GM12878 (cell line): ENCODE measurements at regions of chr6 and their contacts with region 1.

Region 1: GRCh38 chr6:150685860-150686259 is 86.2 kb downstream of the PLEKHG1 start:
- DNase-seq: peak; percentile 11
- ATAC-seq: peak; percentile 82
- H3K4me3 ChIP-seq: no peak overlapping the region
- H3K27ac ChIP-seq: no peak overlapping the region
- H3K4me1 ChIP-seq: peaks cover 10% of the 10 kb centered on the region
- H3K27me3 ChIP-seq: no peaks in the 10 kb centered on the region; a peak in 1 of 4 replicates
- CTCF ChIP-seq: peak; percentile 71 to 85 (median 80)
- EP300 ChIP-seq: no peak
- POLR2A ChIP-seq: no peak
- RAD21 ChIP-seq: peak; percentile 77

Region 2: DNA sequence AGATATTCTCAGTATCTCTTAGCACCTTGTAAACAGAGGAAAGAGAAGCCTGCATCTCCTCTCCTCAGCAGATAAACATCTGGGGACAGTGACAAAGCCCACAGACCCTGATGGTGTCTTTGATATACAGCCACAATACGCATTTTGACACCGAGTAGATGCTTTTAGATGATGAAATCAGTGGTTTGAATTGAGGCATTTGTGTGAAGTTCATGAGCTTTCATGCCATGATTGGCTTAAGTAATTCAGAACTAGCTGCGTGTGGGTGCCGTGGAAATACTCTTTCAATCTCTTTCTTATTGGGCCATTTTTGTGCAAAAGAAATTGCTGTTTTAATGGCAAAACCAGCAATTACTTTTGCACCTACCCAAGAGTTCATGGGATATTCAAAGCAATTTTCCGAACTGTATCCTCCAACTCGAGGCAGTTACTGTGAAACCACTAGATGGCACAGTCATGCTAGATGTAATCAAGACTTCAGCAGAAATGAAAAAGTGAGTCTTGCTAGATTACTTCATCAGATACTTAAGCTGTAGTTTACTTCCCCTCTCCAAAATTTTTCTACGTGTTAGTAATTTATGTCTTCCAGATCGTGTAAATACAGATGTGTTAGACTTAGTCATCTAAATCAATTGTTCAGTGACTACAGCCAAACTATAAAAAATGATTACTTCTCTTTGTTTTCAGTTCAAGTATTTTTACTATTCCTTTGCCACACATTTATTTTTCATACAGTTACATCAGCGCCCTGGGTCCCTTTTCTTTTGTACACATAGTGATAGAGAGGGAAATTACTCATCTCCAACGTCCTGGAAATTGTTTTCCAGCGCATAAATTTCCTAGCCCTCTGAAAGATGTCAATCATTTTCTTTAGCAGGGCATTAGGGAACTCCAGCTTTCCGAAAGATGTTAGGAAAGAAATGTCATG is 267.7 kb before region 1 on chr6:
- CTCF ChIA-PET with region 1: interaction called, 21 read pairs
- POLR2A ChIA-PET with region 1: no interaction called
- RAD21 ChIA-PET with region 1: interaction called, 16 read pairs
- SMC1A ChIA-PET with region 1: interaction called, 9 read pairs
- in situ Hi-C with region 1: no loop called
- intact Hi-C with region 1: loop called (anchors 5 kb)
- DNase-seq: peak; percentile 40
- ATAC-seq: peak; percentile 95
- H3K4me3 ChIP-seq: peak overlapping the region; percentile 57; the same call in 1 of the 2 replicates
- H3K27ac ChIP-seq: no peak overlapping the region
- H3K4me1 ChIP-seq: no peaks in the 10 kb centered on the region
- H3K27me3 ChIP-seq: no peaks in the 10 kb centered on the region; a peak in 1 of 4 replicates
- CTCF ChIP-seq: peak; percentile 77 to 88 (median 80)
- EP300 ChIP-seq: no peak
- POLR2A ChIP-seq: no peak
- RAD21 ChIP-seq: peak; percentile 90

Region 3: GRCh38 chr6:150641398-150642139 is 44.3 kb before region 1 on chr6:
- CTCF ChIA-PET with region 1: interaction called, 12 read pairs
- POLR2A ChIA-PET with region 1: no interaction called
- RAD21 ChIA-PET with region 1: interaction called, 6 read pairs
- SMC1A ChIA-PET with region 1: interaction called, 27 read pairs
- in situ Hi-C with region 1: no loop called
- intact Hi-C with region 1: loop called (anchors 5 kb)
- DNase-seq: no peak
- ATAC-seq: peak; percentile 62
- H3K4me3 ChIP-seq: peak overlapping the region; percentile 59
- H3K27ac ChIP-seq: peak overlapping the region; percentile 63
- H3K4me1 ChIP-seq: peaks cover 30% of the 10 kb centered on the region
- H3K27me3 ChIP-seq: no peaks in the 10 kb centered on the region
- CTCF ChIP-seq: no peak
- EP300 ChIP-seq: no peak
- POLR2A ChIP-seq: no peak
- RAD21 ChIP-seq: no peak

Region 4: GRCh38 chr6:150672800-150673199 is 13.1 kb before region 1 on chr6:
- CTCF ChIA-PET with region 1: interaction called, 18 read pairs
- POLR2A ChIA-PET with region 1: interaction called, 3 read pairs
- RAD21 ChIA-PET with region 1: interaction called, 4 read pairs
- SMC1A ChIA-PET with region 1: interaction called, 14 read pairs
- in situ Hi-C with region 1: no loop called
- intact Hi-C with region 1: no loop called
- DNase-seq: no peak
- ATAC-seq: no peak
- H3K4me3 ChIP-seq: no peak overlapping the region
- H3K27ac ChIP-seq: no peak overlapping the region
- H3K4me1 ChIP-seq: no peaks in the 10 kb centered on the region
- H3K27me3 ChIP-seq: no peaks in the 10 kb centered on the region
- CTCF ChIP-seq: no peak
- EP300 ChIP-seq: no peak
- POLR2A ChIP-seq: no peak
- RAD21 ChIP-seq: no peak

Region 5: DNA sequence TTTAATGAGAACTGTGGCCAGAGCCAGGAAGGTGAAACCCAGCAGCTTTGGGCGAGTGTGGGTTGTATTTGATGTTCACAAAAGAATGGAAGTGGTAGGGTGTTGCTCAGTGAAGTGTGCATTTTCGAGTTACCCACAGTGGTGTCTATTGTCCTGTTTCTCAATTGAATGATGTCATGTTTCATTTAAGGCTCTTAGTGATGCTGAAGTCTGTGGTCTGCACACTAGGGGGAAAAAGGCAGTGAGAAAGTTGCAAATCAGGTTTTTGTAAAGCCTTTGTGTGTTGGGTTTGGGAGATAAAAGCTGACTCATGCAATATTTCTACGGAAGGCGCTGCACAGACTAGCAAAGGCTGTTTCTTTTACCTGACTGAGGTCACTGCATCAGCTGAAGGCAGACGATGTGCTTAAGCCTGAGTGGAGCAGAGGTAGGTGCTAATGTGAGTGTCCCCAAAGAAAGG is 34.9 kb after region 1 on chr6:
- CTCF ChIA-PET with region 1: interaction called, 25 read pairs
- POLR2A ChIA-PET with region 1: interaction called, 3 read pairs
- RAD21 ChIA-PET with region 1: interaction called, 7 read pairs
- SMC1A ChIA-PET with region 1: interaction called, 43 read pairs
- in situ Hi-C with region 1: no loop called
- intact Hi-C with region 1: loop called (anchors 2 kb)
- DNase-seq: peak; percentile 94
- ATAC-seq: peak; percentile 96
- H3K4me3 ChIP-seq: 0 out of 2 replicates have a peak overlapping the region, but pooled peaks have one; percentile 7
- H3K27ac ChIP-seq: peak overlapping the region; percentile 32
- H3K4me1 ChIP-seq: peaks cover 19% of the 10 kb centered on the region
- H3K27me3 ChIP-seq: no peaks in the 10 kb centered on the region
- CTCF ChIP-seq: peak in 1 of 3 experiments; percentile 16; a peak in 1 of 6 replicates
- EP300 ChIP-seq: peak; percentile 77 to 98
- POLR2A ChIP-seq: no peak
- RAD21 ChIP-seq: peak; percentile 40

Region 6: DNA sequence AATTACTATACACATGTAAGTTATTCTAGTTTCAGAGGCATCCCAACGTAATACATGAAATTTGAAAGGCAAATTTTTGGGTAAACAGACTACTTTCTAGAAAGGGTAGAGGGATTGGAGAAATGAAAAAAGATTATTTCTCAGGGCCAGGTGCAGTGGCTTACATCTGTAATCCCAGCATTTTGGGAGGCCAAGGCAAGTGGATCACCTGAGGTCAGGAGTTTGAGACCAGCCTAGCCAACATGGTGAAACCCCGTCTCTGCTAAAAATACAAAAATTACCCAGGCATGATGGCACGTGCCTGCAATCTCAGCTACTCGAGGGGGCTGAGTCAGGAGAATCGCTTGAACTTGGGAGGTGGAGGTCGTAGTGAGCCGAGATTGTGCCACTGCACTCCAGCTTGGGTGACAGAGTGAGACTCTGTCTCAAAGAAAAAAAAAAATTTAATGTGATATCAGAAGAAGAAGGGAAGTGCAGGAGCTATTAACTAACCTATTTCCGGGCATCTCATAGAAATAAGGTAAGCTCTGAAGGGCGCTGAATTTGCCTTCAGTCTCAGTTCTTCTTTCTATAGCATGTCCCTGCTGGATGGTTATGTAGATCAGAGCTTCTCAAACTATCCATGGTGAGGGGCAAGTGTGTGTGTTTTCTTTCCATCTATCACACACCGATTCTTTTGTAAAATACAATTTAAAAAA is 79.4 kb after region 1 on chr6:
- CTCF ChIA-PET with region 1: interaction called, 12 read pairs
- POLR2A ChIA-PET with region 1: no interaction called
- RAD21 ChIA-PET with region 1: no interaction called
- SMC1A ChIA-PET with region 1: interaction called, 4 read pairs
- in situ Hi-C with region 1: no loop called
- intact Hi-C with region 1: no loop called
- DNase-seq: peak; percentile 33
- ATAC-seq: peak; percentile 95
- H3K4me3 ChIP-seq: peak overlapping the region; percentile 54; the same call in 1 of the 2 replicates
- H3K27ac ChIP-seq: peak overlapping the region; percentile 28
- H3K4me1 ChIP-seq: peaks cover 19% of the 10 kb centered on the region
- H3K27me3 ChIP-seq: no peaks in the 10 kb centered on the region
- CTCF ChIP-seq: no peak
- EP300 ChIP-seq: no peak
- POLR2A ChIP-seq: no peak
- RAD21 ChIP-seq: no peak